Activated B cell treated with CpG ODN at 0.5 μM for 24 hours (primary cell): ENCODE measurements at regions of chr6 and their contacts with region 1.

Region 1: DNA sequence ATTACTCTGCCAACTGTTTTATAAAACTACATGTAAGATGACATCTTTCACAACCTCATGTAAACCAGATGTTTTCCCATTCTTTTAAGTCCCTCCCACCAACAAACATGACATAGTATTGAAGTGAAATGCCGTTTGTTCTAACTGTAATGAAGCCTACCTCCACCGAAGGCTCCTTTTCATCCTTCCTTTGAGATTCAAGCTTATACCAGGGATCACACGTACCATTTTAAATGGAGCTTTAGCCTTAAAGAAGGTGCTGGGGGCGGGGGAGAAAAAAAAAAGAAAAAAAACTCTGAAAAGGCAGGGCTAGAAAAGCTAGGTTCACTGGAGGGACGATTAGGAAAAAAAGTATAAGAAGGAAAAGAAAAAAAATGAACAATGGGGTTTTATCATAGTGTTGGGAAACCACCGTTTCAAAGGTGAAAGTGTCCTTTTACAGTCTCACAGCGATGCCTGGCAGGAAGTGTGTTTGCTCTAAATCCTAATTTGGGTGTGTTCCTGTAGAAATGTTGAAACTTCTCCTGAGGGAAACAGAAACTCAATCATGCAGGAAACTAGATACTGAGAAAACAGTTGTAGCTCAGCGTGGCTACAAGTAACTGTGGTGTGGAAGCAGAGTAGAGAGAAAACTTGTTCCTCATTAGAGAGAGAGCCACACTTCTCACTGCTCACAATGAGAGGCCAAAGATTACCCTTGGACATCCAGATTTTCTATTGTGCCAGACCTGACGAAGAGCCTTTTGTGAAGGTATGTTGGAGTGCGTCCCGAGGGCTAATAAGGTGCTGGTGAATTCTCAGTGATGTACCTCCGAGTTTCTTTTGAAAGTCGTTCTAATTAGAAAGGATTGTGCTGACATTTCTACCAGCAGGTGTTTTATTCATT is 37.6 kb upstream of the HINT3 start:
- DNase-seq: no peak
- ATAC-seq: peak; percentile 90
- H3K4me3 Mint-ChIP-seq: peak overlapping the region; percentile 80
- H3K27ac Mint-ChIP-seq: peak overlapping the region; percentile 90
- H3K4me1 Mint-ChIP-seq: peaks cover 28% of the 10 kb centered on the region
- H3K27me3 Mint-ChIP-seq: no peaks in the 10 kb centered on the region
- CTCF ChIP-seq: no peak

Region 2: DNA sequence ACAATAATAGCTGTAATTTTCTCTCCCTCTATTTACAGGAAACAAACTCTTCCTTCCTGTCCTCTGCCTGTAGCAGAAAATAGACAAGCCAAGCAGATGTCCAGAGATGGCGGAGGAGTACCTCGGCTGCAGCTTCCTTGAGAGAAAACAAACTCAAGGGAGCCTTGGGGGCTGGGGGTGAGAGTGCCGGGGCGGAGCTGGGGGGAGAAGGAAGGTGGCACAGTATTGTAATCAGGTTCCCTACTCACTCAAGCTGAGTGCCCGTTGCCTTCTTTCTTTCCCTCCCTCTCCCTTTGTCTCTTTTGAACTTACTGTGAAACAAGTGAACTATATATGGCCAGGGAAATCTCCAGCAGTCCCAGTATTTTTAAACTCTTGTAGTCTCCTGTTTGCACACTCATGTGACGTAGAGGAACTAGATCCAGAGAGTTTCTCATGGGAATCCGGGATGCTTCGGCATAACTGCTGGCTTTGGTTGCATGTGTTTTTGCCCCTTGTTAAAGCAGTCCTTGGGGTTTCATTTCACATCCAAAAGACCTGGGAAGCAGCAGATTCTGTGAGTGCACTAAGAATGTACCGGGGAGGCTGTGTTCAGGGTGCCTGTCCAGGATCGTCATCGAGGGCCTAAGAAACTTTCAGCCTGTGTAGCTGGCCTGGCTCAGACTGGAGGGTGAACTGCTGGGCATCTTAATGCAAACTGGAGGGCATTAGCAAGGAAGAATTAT is 572.6 kb before region 1 on chr6:
- CTCF ChIA-PET with region 1: no interaction called
- POLR2A ChIA-PET with region 1: no interaction called
- intact Hi-C with region 1: loop called (anchors 2 kb)
- DNase-seq: no peak
- ATAC-seq: peak; percentile 78
- H3K4me3 Mint-ChIP-seq: no peak overlapping the region
- H3K27ac Mint-ChIP-seq: no peak overlapping the region
- H3K4me1 Mint-ChIP-seq: peaks cover 4% of the 10 kb centered on the region
- H3K27me3 Mint-ChIP-seq: no peaks in the 10 kb centered on the region
- CTCF ChIP-seq: no peak

Region 3: GRCh38 chr6:125821825-125822281 is 97.1 kb before region 1 on chr6:
- CTCF ChIA-PET with region 1: no interaction called
- POLR2A ChIA-PET with region 1: no interaction called
- intact Hi-C with region 1: no loop called
- DNase-seq: no peak
- ATAC-seq: no peak
- H3K4me3 Mint-ChIP-seq: no peak overlapping the region
- H3K27ac Mint-ChIP-seq: no peak overlapping the region
- H3K4me1 Mint-ChIP-seq: peaks cover 11% of the 10 kb centered on the region
- H3K27me3 Mint-ChIP-seq: no peaks in the 10 kb centered on the region
- CTCF ChIP-seq: no peak